ENCODE measurements at regions of chr22 and their contacts with region 1.

Region 1: GRCh38 chr22:37260901-37261336 is 16.9 kb upstream of the RAC2 start:
- DNase-seq: peak; percentile 75
- H3K4me3 Mint-ChIP-seq: no peak overlapping the region
- H3K27ac Mint-ChIP-seq: no peak overlapping the region
- H3K4me1 Mint-ChIP-seq: peaks cover 34% of the 10 kb centered on the region
- H3K27me3 Mint-ChIP-seq: no peaks in the 10 kb centered on the region

Region 2: DNA sequence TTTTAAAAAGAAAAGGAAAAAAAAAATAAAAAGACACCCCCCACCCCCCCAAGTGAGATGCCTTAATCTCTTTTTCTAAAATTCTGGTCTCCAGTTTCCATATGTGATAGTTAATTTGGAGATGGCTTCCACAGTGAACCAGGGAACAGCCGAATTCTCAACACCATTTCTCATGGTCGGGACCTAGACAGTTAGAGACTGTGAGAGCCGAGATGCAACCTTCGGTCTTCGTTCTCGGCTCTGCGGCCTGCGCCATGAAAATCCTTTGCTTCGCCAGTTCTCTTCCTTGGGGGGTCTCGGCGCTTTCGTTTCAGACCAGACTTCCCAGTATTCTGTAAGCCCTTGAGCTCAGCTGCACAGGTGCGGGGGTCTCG is 558.1 kb before region 1 on chr22:
- CTCF ChIA-PET with region 1: no interaction called
- intact Hi-C with region 1: no loop called
- DNase-seq: no peak
- H3K4me3 Mint-ChIP-seq: no peak overlapping the region
- H3K27ac Mint-ChIP-seq: no peak overlapping the region
- H3K4me1 Mint-ChIP-seq: peaks cover 5% of the 10 kb centered on the region
- H3K27me3 Mint-ChIP-seq: peaks cover 52% of the 10 kb centered on the region

Region 3: GRCh38 chr22:36986242-36986821 is 274.6 kb before region 1 on chr22:
- CTCF ChIA-PET with region 1: interaction called, 9 read pairs
- intact Hi-C with region 1: loop called (anchors 1 kb)
- DNase-seq: peak; percentile 79
- H3K4me3 Mint-ChIP-seq: no peak overlapping the region
- H3K27ac Mint-ChIP-seq: no peak overlapping the region
- H3K4me1 Mint-ChIP-seq: no peaks in the 10 kb centered on the region
- H3K27me3 Mint-ChIP-seq: peaks cover 18% of the 10 kb centered on the region

Region 4: GRCh38 chr22:37237371-37238268 is 23.3 kb before region 1 on chr22:
- CTCF ChIA-PET with region 1: interaction called, 220 read pairs
- intact Hi-C with region 1: loop called (anchors 1 kb)
- DNase-seq: peak; percentile 33
- H3K4me3 Mint-ChIP-seq: peak overlapping the region; percentile 80
- H3K27ac Mint-ChIP-seq: peak overlapping the region; percentile 99
- H3K4me1 Mint-ChIP-seq: peaks cover 90% of the 10 kb centered on the region
- H3K27me3 Mint-ChIP-seq: no peaks in the 10 kb centered on the region

Region 5: DNA sequence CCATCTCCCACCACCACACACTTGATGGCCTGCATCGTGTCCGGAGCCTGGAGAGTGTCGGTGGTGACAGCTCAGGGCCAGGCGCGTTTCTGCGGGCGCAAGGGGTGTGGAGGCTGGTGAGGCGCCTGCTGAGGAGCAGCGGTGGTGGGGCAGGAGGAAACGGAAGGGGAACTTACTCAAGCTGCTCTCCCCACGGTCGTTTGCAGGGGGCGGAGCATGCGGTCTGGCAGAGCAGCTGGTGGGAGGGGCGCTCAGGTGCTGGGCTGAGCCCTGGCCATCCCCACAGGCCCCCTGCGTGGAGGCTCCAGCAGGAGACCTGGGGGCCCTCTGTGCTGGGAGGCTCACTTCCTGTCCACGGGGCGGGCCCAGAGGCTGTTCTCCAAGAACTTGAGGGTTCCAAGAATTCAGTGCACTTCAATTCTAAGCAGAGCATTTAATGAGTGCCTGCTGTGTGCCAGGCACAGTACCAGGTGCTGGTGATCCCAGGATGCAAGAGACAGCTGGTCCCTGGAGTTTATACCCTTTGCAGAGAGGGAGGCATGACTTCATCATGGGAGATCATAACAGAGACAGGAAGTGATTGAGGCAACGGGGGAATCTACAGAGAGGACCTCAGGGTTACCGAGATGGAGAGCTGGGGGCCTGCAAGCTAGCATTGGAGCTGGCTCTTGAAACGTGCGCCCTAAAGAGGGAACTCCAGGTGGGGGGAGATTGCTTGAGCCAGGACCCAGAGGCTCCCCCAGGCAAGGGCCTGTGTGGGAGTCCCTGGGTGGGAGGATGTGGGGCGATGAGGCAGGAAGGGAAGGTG is 16.6 kb before region 1 on chr22 and contains the start of gene RAC2:
- CTCF ChIA-PET with region 1: interaction called, 220 read pairs
- intact Hi-C with region 1: loop called (anchors 1 kb)
- DNase-seq: peak; percentile 94
- H3K4me3 Mint-ChIP-seq: peak within 1 kb of the TSS; percentile 99
- H3K27ac Mint-ChIP-seq: peak within 1 kb of the TSS; percentile 99
- H3K4me1 Mint-ChIP-seq: peaks cover 38% of the 10 kb centered on the region
- H3K27me3 Mint-ChIP-seq: no peaks in the 10 kb centered on the region
- total RNA-seq, gene RAC2: 728 to 759 TPM

Region 6: GRCh38 chr22:37428649-37429586 is 168.0 kb after region 1 on chr22:
- CTCF ChIA-PET with region 1: interaction called, 19 read pairs
- intact Hi-C with region 1: no loop called
- DNase-seq: peak; percentile 69
- H3K4me3 Mint-ChIP-seq: no peak overlapping the region
- H3K27ac Mint-ChIP-seq: no peak overlapping the region
- H3K4me1 Mint-ChIP-seq: peaks cover 16% of the 10 kb centered on the region
- H3K27me3 Mint-ChIP-seq: peaks cover 42% of the 10 kb centered on the region

Region 7: GRCh38 chr22:37686002-37686982 is 425.4 kb after region 1 on chr22 and contains the start of gene NOL12:
- CTCF ChIA-PET with region 1: no interaction called
- intact Hi-C with region 1: no loop called
- DNase-seq: peak; percentile 81
- H3K4me3 Mint-ChIP-seq: peak within 1 kb of the TSS; percentile 92
- H3K27ac Mint-ChIP-seq: peak within 1 kb of the TSS; percentile 85
- H3K4me1 Mint-ChIP-seq: peaks cover 32% of the 10 kb centered on the region
- H3K27me3 Mint-ChIP-seq: no peaks in the 10 kb centered on the region
- total RNA-seq, gene NOL12: 26.7 to 30.4 TPM